AG04449 (cell line): ENCODE measurements at regions of chr20 and their contacts with region 1.

Region 1: GRCh38 chr20:19784511-19785172 is 26.6 kb downstream of the RIN2 start:
- DNase-seq: no peak
- H3K4me3 ChIP-seq: no peak overlapping the region
- CTCF ChIP-seq: peak; percentile 57

Region 2: DNA sequence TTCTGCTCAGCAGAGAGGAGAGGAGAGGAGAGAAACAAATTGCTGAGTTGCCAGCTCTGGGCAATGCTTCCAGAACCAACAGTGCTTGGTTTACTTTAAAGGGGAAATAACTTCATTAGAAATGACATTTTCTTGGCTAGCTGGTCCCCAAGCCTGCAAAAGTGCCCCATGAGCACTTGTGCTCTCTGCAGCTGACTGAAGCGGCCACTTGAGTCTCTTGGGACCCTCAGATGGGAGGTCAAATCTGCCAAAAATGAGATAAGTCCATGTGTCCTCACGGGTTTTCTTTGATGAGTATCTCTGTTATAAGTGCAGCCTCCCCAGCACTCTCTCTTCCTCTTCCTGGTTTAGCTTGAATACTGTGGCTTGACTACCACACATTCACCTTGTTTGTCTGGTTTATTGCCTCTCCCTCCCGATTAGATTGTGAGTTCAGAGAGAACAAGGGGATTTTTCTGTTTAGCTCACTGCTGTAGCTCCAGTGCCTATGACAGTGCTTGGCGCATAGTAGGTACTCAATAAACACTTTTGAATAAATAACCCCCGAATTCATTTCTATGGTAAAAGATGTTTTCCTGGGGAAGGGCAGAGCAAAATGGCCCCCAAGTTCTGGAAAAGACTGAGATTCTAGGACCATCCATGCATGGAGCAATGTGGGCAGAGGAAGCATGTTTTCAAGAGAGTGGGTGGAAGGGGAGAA is 33.6 kb before region 1 on chr20:
- CTCF ChIA-PET with region 1: no interaction called
- POLR2A ChIA-PET with region 1: no interaction called
- DNase-seq: no peak
- H3K4me3 ChIP-seq: no peak overlapping the region
- CTCF ChIP-seq: no peak

Region 3: GRCh38 chr20:19767061-19767460 is 17.6 kb before region 1 on chr20:
- CTCF ChIA-PET with region 1: interaction called, 36 read pairs
- POLR2A ChIA-PET with region 1: no interaction called
- DNase-seq: no peak
- H3K4me3 ChIP-seq: no peak overlapping the region
- CTCF ChIP-seq: no peak

Region 4: GRCh38 chr20:19921284-19921793 is 136.7 kb after region 1 on chr20:
- CTCF ChIA-PET with region 1: interaction called, 11 read pairs
- POLR2A ChIA-PET with region 1: no interaction called
- DNase-seq: no peak
- H3K4me3 ChIP-seq: no peak overlapping the region
- CTCF ChIP-seq: no peak

Region 5: DNA sequence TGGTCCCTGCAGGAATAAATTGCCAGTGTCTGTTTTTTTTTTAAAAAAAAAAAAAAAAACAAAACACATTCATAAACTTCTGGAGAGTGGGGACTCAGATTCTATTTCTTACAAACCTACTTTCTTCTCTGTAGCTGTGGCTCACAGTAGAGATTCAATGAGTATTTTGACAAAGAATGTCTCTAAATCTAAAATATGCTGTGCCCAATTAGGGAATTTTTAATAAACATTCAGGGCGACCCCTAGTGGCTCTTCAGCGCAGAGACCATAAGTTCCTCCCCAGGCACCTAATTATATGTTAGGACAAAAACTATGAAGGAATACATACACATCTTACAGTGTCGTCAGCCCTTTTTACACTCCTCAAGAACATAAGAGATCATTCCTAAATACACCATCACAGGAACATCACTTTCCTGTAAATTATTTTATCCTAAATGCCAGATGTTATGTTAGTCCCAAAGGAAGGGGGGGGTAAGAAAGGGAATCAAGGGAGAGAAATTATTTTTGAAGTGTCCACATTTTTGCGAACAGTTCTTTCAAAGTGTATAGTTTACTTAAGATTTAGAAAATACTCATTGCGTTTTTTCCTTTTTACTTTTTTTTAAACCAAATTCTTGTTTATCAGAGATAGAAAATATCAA is 210.7 kb after region 1 on chr20:
- CTCF ChIA-PET with region 1: interaction called, 97 read pairs
- POLR2A ChIA-PET with region 1: interaction called, 18 read pairs
- DNase-seq: no peak
- H3K4me3 ChIP-seq: no peak overlapping the region
- CTCF ChIP-seq: peak; percentile 53

Region 6: GRCh38 chr20:20017001-20017843 is 232.6 kb after region 1 on chr20 and contains the start of gene NAA20:
- CTCF ChIA-PET with region 1: interaction called, 40 read pairs
- POLR2A ChIA-PET with region 1: no interaction called
- DNase-seq: no peak
- H3K4me3 ChIP-seq: peak within 1 kb of the TSS; percentile 88
- CTCF ChIP-seq: peak; percentile 89